ENCODE measurements at regions of chr15 and their contacts with region 1.

Region 1: DNA sequence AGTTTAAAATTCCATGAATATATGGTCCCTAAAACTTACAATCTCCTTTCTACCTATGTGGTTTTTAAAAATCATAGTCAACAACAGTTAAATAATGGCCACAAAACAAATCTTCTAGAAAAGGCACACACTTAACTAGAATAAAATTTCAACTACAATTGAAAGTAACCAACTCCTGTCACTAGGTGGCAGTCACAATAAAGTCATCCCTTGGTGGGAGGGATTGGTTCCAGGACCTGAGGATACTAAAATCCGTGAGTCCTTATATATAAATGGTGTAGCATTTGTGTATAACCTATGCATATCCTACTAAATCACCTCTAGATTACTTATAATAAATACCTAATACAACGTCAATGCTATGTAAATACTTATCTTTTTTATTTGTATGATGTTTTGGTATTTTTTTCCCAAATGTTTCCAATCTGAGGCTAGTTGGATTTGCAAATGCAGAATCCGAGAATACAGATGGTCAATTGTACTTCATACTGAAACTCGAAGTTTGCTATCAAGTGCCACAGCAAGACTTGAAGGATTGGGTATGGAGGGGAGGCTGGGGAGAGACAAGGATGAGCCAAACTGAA is 172.6 kb downstream of the FMN1 start:
- DNase-seq: peak in 1 of 2 experiments; percentile 48
- H3K4me3 ChIP-seq: no peak overlapping the region
- H3K4me3 Mint-ChIP-seq: no peak overlapping the region
- H3K27ac Mint-ChIP-seq: no peak overlapping the region
- H3K4me1 ChIP-seq: no peaks in the 10 kb centered on the region
- H3K4me1 Mint-ChIP-seq: no peaks in the 10 kb centered on the region
- H3K27me3 ChIP-seq: no peaks in the 10 kb centered on the region
- H3K27me3 Mint-ChIP-seq: no peaks in the 10 kb centered on the region
- CTCF ChIP-seq: peak; percentile 59 to 72

Region 2: DNA sequence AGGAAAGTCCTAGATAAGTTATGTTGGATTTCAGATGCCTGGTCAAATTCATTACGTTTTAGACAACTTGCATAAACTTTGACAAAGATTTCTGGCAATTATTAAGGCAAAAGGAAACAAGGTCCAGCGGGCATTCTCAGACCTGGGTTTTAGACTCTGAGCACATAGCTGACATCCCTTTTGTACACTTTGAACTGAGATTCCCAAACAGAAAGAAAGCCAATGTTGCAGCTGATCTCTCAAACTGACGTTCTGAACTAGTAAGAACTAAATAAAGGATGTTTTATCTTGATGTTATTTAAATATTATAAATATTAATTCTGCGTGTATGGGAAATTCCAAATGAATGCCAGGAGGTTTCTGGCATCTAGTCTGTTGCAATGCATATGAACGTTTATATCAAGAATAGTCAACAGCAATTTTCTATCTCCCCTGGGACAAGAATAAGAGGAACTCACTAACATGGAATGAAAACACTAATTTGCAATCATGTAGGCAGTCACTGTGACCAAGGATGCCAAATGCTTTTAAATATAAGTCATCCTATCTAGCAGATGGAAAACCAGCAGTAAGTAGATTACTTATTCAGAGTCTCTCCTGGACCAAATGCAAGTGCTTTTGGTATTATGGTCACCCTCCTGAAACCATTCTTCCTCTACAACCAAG is 102.0 kb before region 1 on chr15:
- CTCF ChIA-PET with region 1: no interaction called
- POLR2A ChIA-PET with region 1: no interaction called
- intact Hi-C with region 1: no loop called
- DNase-seq: no peak
- H3K4me3 ChIP-seq: no peak overlapping the region
- H3K4me3 Mint-ChIP-seq: no peak overlapping the region
- H3K27ac Mint-ChIP-seq: no peak overlapping the region
- H3K4me1 ChIP-seq: no peaks in the 10 kb centered on the region
- H3K4me1 Mint-ChIP-seq: no peaks in the 10 kb centered on the region
- H3K27me3 ChIP-seq: no peaks in the 10 kb centered on the region
- H3K27me3 Mint-ChIP-seq: peaks cover 4% of the 10 kb centered on the region
- CTCF ChIP-seq: no peak

Region 3: GRCh38 chr15:33007303-33007855 is 14.5 kb before region 1 on chr15:
- CTCF ChIA-PET with region 1: no interaction called
- POLR2A ChIA-PET with region 1: no interaction called
- intact Hi-C with region 1: no loop called
- DNase-seq: peak in 1 of 2 experiments; percentile 13
- H3K4me3 ChIP-seq: no peak overlapping the region
- H3K4me3 Mint-ChIP-seq: no peak overlapping the region
- H3K27ac Mint-ChIP-seq: no peak overlapping the region
- H3K4me1 ChIP-seq: no peaks in the 10 kb centered on the region
- H3K4me1 Mint-ChIP-seq: no peaks in the 10 kb centered on the region
- H3K27me3 ChIP-seq: no peaks in the 10 kb centered on the region
- H3K27me3 Mint-ChIP-seq: no peaks in the 10 kb centered on the region
- CTCF ChIP-seq: no peak

Region 4: GRCh38 chr15:33074942-33075341 is 53.0 kb after region 1 on chr15:
- CTCF ChIA-PET with region 1: no interaction called
- POLR2A ChIA-PET with region 1: no interaction called
- intact Hi-C with region 1: loop called (anchors 5 kb)
- DNase-seq: no peak
- H3K4me3 ChIP-seq: no peak overlapping the region
- H3K4me3 Mint-ChIP-seq: no peak overlapping the region
- H3K27ac Mint-ChIP-seq: no peak overlapping the region
- H3K4me1 ChIP-seq: no peaks in the 10 kb centered on the region
- H3K4me1 Mint-ChIP-seq: no peaks in the 10 kb centered on the region
- H3K27me3 ChIP-seq: no peaks in the 10 kb centered on the region
- H3K27me3 Mint-ChIP-seq: peaks cover 4% of the 10 kb centered on the region
- CTCF ChIP-seq: no peak

Region 5: GRCh38 chr15:33132722-33133345 is 110.9 kb after region 1 on chr15:
- CTCF ChIA-PET with region 1: no interaction called
- POLR2A ChIA-PET with region 1: no interaction called
- intact Hi-C with region 1: loop called (anchors 1 kb)
- DNase-seq: peak; percentile 51 to 64
- H3K4me3 ChIP-seq: no peak overlapping the region
- H3K4me3 Mint-ChIP-seq: no peak overlapping the region
- H3K27ac Mint-ChIP-seq: no peak overlapping the region
- H3K4me1 ChIP-seq: no peaks in the 10 kb centered on the region
- H3K4me1 Mint-ChIP-seq: no peaks in the 10 kb centered on the region
- H3K27me3 ChIP-seq: no peaks in the 10 kb centered on the region
- H3K27me3 Mint-ChIP-seq: peaks cover 11% of the 10 kb centered on the region
- CTCF ChIP-seq: peak; percentile 70 to 78

Region 6: GRCh38 chr15:33154351-33155166 is 132.7 kb after region 1 on chr15:
- CTCF ChIA-PET with region 1: no interaction called
- POLR2A ChIA-PET with region 1: no interaction called
- intact Hi-C with region 1: no loop called
- DNase-seq: no peak
- H3K4me3 ChIP-seq: no peak overlapping the region
- H3K4me3 Mint-ChIP-seq: no peak overlapping the region
- H3K27ac Mint-ChIP-seq: no peak overlapping the region
- H3K4me1 ChIP-seq: peaks cover 3% of the 10 kb centered on the region; the same call in 1 of the 2 replicates
- H3K4me1 Mint-ChIP-seq: peaks cover 6% of the 10 kb centered on the region
- H3K27me3 ChIP-seq: no peaks in the 10 kb centered on the region
- H3K27me3 Mint-ChIP-seq: peaks cover 3% of the 10 kb centered on the region
- CTCF ChIP-seq: no peak

Measured in Caco-2 (cell line).